AG04449 (cell line): ENCODE measurements at regions of chr17 and their contacts with region 1.

Region 1: DNA sequence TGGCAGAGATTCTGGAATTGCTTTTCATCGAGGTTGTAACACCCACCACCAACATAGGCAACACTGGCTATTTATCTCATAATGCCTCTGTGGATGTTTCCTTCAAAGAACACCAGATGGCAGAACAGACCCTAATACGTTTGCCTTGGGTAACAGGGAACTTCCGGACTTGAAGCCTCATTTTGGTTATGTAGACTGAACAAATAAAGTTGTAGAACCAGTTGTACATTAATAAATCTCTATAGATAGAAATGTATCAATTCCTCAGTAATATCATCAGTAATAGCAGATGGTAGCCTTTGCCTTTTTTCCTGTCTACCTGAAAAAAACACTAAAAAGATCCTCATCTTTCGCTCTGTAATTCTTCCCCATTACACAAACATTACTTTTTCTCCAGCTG is 25.9 kb upstream of the APOH start:
- DNase-seq: no peak
- H3K4me3 ChIP-seq: no peak overlapping the region
- CTCF ChIP-seq: peak; percentile 56

Region 2: DNA sequence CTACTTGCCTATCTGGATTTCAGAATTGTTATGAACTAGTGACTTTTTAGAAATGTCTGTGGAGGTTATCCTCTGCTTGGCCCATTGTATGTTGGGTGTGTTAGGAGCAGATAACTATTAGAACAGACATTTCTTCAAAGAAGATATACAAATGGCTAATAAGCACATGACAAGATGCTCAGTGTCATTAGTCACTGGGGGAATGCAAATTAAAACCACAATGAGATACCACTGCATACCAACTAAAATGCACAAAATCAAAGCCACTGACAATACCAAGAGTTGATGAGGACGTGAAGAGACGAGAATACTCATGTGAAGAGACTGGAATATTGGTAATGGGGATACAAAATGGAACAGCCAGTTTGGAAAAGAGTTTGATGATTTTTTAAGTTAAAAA is 102.4 kb before region 1 on chr17:
- CTCF ChIA-PET with region 1: no interaction called
- POLR2A ChIA-PET with region 1: no interaction called
- DNase-seq: no peak
- H3K4me3 ChIP-seq: no peak overlapping the region
- CTCF ChIP-seq: no peak

Region 3: DNA sequence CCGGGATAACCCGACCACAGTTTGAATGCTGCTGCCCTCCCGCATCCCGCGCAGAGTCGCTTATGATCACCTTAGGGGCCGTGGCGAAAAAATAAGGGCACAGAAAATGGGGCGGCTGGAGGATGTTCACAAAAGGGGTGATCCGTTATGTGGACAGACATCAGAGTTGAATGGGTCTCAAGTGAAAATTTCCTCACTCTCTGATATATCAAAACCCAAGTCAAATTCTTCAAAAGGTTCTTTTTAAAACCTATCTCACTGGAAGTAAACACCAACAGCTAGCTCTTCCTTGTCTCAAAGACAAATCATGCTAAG is 62.8 kb before region 1 on chr17:
- CTCF ChIA-PET with region 1: no interaction called
- POLR2A ChIA-PET with region 1: no interaction called
- DNase-seq: no peak
- H3K4me3 ChIP-seq: peak overlapping the region; percentile 64
- CTCF ChIP-seq: no peak

Region 4: DNA sequence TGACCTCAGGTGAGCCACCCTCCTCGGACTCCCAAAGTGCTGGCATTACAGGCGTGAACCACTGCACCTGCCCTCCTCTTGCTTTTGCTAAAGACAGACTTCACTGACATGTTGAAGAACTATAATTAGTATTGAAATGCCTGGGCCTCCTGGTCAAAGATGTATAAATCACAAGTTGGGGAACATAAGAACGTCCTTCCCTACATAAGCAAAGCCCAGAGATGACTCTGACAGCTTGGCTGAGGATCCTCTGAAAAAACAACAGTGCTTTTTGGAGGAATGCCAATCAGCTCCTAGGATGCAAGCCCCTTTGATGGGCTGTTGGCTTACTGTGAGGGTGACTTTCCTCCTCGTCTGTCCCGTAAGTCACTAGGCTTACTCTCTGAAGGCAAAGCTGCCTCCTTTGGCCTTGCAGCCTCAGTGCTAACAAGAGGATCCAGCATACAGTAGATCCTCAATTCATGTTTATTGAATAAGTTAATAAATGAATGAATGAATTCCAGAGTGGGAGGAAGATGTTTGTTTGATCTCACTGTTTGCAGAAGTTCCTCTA is 32.2 kb before region 1 on chr17:
- CTCF ChIA-PET with region 1: no interaction called
- POLR2A ChIA-PET with region 1: no interaction called
- DNase-seq: no peak
- H3K4me3 ChIP-seq: no peak overlapping the region
- CTCF ChIP-seq: no peak

Region 5: DNA sequence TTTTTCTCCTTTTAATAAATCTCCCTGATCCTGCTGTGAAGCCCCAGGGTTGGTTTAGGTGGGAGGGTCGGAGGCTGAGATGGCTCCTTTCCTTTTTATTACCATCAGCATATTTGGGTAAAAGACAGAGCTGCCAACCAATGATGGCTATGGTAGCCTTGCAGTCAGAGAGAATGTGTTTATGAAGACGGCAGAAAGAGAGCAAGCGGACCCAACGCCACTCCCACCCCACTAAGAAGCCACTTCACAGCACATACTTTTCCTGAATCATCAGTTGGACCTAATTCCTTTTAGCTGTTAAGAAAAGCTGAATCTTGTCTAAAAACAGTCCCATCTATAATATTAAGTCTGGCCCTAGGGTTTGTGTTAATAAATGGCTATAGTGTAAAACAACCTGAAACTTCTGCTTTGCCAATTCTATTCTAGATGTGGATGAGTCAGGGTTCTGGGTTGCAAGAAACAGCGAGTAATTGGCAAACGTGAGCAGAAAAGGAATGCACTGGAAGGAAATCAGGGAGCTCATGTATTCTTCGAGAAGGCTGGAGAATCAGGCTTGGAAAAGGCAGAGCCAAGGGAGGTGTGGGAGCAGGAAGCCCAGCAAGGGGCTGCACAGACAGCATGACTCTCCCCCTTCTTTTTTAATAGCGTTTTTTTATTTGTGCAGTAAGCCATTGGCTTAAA is 13.3 kb after region 1 on chr17:
- CTCF ChIA-PET with region 1: interaction called, 15 read pairs
- POLR2A ChIA-PET with region 1: no interaction called
- DNase-seq: peak; percentile 66
- H3K4me3 ChIP-seq: no peak overlapping the region
- CTCF ChIP-seq: no peak

Region 6: GRCh38 chr17:66317629-66318028 is 62.5 kb after region 1 on chr17:
- CTCF ChIA-PET with region 1: no interaction called
- POLR2A ChIA-PET with region 1: no interaction called
- DNase-seq: no peak
- H3K4me3 ChIP-seq: no peak overlapping the region
- CTCF ChIP-seq: no peak

Region 7: DNA sequence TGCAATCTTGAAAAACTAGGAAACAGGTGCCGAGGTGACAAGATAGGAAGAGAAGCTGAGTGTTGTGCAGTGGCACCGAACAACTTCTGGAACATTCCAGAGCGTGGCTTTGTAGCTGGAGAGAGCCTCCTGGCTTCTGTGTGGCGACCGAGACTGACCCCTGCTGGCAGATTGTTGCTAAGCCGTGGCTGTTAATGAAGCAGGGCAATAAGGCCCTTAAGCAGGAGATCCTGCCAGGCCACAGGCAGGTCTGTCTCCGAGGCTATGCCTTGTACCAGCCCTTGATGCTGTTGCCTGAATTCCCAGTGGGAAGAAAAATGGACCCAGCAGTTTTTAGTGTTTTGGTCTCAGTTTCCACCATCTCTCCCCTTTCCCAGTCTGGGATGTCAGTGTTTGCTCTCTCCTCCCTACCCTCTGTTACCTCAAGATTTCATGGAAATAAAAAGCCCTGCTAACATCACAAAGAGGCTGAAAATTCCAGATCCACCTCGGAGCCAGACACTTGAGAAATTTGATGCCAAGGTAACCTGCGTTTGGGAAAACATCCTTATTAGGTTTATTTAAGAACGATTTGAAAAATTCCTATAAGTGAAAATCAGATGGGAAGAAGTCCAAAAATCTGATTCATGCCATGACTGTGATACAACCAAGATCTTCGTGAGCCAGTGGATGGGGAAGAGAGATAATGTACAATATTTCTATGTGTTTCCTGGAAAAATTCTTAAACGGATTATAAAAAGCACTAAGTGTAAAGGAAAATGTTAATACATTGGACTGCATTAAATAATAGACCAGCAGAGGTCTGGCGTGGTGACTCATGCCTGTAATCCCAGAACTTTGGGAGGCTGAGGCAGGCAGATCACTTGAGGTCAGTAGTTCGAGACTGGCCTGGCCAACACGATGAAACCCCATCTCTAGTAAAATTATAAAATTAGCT is 312.4 kb after region 1 on chr17:
- CTCF ChIA-PET with region 1: interaction called, 40 read pairs
- POLR2A ChIA-PET with region 1: no interaction called
- DNase-seq: peak; percentile 74
- H3K4me3 ChIP-seq: no peak overlapping the region
- CTCF ChIP-seq: peak; percentile 84

Region 8: DNA sequence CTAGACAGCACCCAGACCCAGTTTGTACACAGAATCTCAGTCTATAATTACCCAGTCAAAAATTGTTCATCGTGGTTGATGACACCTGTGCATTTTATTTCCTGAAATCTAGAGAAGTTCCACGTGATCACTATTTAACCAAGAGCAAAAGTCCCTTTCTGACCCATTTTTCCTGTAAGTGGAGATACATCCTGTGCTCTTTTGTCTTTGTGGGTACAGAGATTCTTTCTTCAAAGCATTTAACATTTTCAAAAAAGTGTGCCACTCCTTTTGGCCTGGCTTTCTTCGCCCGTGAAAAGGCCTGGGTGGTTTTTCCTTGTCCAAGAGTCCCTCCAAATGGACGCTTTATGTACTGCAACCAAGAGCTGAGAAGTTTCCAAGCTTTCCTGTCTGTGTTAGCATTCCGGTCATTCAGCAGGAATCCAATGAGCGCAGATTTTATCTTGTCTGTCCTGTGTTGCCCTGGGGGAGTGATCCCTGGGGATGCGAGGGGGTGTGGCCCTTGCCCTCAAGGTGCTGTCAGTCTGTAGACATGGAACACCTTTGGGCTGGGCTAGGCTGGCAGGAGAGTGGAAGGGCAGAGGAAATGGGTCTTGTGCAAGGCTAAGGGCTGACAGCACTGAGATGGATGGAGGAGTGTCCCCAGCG is 418.7 kb after region 1 on chr17:
- CTCF ChIA-PET with region 1: interaction called, 13 read pairs
- POLR2A ChIA-PET with region 1: no interaction called
- DNase-seq: peak; percentile 14
- H3K4me3 ChIP-seq: no peak overlapping the region
- CTCF ChIP-seq: peak; percentile 63